ENCODE measurements at regions of chr11 and their contacts with region 1.

Region 1: GRCh38 chr11:72831513-72832300 is 17.5 kb downstream of the ATG16L2 start:
- DNase-seq: peak; percentile 54
- ATAC-seq: peak; percentile 98
- H3K4me3 ChIP-seq: no peak overlapping the region
- H3K27ac ChIP-seq: no peak overlapping the region
- H3K4me1 ChIP-seq: peaks cover 0 to 6% of the 10 kb centered on the region in 2 experiments; a peak in 2 of 4 replicates
- H3K27me3 ChIP-seq: no peaks in the 10 kb centered on the region
- CTCF ChIP-seq: peak; percentile 91 to 97 (median 93)
- POLR2A ChIP-seq: no peak
- RAD21 ChIP-seq: peak; percentile 95

Region 2: DNA sequence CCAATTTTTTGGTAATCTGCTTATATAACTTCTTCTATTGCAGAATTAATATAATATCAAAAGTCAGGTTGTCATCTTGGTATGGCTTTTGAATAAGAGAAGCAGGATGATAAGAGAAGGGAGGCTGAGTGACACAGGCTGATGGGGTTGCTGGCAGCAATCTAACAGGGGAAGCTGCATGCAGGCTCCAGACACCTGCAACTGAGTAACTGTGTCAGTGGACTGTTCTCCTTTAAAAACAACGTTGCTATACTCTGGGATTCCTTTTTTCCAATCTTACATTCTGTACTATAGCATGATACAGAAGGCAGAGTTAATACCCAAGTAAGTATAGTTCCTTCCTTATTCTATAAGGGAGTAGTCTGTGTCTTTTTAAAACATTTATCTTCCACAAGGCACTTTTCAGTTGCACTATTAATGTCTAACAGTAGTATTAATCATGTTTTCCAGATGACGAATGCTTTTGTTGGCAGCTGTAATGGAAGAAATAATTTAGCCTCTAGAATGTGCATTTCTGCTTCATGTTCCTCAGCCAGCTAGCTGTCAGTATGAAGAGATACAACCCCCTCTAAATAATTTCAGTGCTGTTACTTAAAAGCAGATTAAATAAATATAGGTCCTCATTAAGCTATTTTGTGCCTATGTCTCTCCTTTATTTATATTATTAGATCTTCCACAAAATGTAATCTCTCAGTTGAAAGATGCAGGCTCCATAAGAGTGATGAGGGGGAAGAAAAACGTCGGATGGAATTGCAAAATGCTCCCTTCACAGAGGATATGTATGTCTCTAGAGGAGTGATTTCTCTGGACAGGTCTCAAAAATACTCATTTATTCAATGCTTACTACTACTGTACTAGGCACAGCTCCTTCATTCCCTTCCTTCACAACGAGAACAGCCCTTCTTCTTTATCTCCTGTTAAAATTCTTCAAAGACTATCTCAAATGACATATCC is 33.3 kb after region 1 on chr11:
- CTCF ChIA-PET with region 1: no interaction called
- POLR2A ChIA-PET with region 1: no interaction called
- RAD21 ChIA-PET with region 1: no interaction called
- intact Hi-C with region 1: no loop called
- DNase-seq: no peak
- ATAC-seq: no peak
- H3K4me3 ChIP-seq: no peak overlapping the region
- H3K27ac ChIP-seq: no peak overlapping the region
- H3K4me1 ChIP-seq: no peaks in the 10 kb centered on the region
- H3K27me3 ChIP-seq: no peaks in the 10 kb centered on the region
- CTCF ChIP-seq: no peak
- POLR2A ChIP-seq: no peak
- RAD21 ChIP-seq: no peak

Region 3: GRCh38 chr11:73242251-73243079 is 410.8 kb after region 1 on chr11:
- CTCF ChIA-PET with region 1: interaction called, 9 read pairs
- POLR2A ChIA-PET with region 1: interaction called, 4 read pairs
- RAD21 ChIA-PET with region 1: no interaction called
- intact Hi-C with region 1: loop called (anchors 1 kb)
- DNase-seq: peak; percentile 65
- ATAC-seq: peak; percentile 93
- H3K4me3 ChIP-seq: peak overlapping the region; percentile 42 to 48
- H3K27ac ChIP-seq: no peak overlapping the region
- H3K4me1 ChIP-seq: peaks cover 0 to 26% of the 10 kb centered on the region in 2 experiments; a peak in 1 of 4 replicates
- H3K27me3 ChIP-seq: no peaks in the 10 kb centered on the region
- CTCF ChIP-seq: peak; percentile 96 to 98 (median 97)
- POLR2A ChIP-seq: no peak
- RAD21 ChIP-seq: peak; percentile 93